Posterior vena cava (tissue), 2 donors: ENCODE measurements at regions of chr20 and their contacts with region 1.

Region 1: DNA sequence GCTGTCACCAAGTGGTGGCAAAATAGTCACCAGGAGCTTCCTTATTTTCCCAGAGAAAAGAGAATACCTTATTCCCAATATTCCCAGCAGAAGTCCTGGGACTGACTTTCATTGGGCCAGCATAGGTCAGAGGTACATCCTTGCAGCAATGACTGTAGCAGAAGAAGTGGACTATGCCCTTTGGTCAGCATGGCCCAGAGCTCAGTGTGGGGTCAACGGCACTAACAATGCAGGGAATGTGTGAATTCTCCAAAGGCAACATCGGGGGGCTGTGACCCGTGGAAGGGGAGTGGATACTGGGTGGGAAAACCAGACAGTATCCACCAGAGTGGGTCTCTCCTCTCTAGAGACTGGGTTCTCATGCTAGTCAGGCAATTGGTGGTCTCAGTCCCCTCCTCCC is 15.6 kb upstream of the LBP start:
- DNase-seq: no peak

Region 2: GRCh38 chr20:37737826-37738420 is 592.7 kb before region 1 on chr20:
- intact Hi-C with region 1: loop called in 1 of 2 experiments (anchors 5 kb)
- DNase-seq: no peak

Region 3: GRCh38 chr20:39706184-39706663 is 1375.6 kb after region 1 on chr20:
- intact Hi-C with region 1: no loop called
- DNase-seq: no peak